Activated CD8-positive, alpha-beta T cell treated with anti-CD3 and anti-CD28 coated beads, Interleukin-2, amount 10 ng/mL, durations not matched to agents 7 days and 5 days (primary cell): ENCODE measurements at regions of chr4 and their contacts with region 1.

Region 1: DNA sequence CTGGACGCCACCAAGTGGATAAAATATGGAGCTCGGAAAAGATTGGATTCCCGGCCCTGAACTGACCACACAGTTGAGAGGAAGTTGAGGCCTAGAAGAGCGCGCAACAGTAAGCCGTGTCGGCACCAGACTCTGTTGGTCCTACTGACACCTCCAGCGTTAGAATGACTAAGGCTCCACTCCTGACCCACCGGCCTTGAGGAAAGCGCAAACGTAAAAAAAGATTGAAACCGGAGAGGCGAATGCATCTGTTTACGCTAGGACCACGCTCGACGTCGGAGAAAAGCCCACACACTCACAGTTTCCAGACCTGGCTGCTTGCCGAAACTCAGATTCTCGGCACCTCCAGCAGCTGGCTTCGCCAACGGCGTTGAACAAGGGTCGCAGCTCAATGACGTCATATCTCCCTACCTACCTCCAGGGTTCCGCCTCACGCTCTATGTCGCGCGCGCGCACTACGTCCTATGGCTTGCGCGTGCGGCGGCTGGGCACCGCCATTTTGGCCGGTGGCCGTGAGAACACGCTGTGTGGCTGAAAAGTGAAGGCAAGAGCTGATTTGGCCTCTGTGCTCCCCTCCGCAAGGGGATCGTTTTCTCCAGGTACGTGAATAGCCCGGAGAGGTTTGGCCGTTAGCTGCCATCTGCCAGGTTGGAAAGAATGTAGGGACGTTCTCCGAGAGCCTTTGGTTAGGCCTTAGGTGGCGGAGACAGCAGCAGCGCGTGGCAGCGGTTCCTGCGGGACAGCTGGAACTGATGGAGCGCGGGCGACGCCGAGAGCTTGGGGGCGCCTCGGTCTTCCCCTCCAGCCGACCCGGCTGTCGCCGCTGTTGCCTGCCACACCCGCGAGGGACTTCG is at the starts of genes ABCE1 and ANAPC10:
- DNase-seq: peak; percentile 97
- ATAC-seq: peak; percentile 91
- H3K4me3 Mint-ChIP-seq: peak within 1 kb of the TSS; percentile 86
- H3K27ac Mint-ChIP-seq: peak within 1 kb of the TSS; percentile 94
- H3K4me1 Mint-ChIP-seq: peaks cover 24% of the 10 kb centered on the region
- H3K27me3 Mint-ChIP-seq: no peaks in the 10 kb centered on the region
- total RNA-seq, gene ABCE1: 72.9 to 75.0 TPM
- total RNA-seq, gene ANAPC10: 24.5 to 26.0 TPM

Region 2: DNA sequence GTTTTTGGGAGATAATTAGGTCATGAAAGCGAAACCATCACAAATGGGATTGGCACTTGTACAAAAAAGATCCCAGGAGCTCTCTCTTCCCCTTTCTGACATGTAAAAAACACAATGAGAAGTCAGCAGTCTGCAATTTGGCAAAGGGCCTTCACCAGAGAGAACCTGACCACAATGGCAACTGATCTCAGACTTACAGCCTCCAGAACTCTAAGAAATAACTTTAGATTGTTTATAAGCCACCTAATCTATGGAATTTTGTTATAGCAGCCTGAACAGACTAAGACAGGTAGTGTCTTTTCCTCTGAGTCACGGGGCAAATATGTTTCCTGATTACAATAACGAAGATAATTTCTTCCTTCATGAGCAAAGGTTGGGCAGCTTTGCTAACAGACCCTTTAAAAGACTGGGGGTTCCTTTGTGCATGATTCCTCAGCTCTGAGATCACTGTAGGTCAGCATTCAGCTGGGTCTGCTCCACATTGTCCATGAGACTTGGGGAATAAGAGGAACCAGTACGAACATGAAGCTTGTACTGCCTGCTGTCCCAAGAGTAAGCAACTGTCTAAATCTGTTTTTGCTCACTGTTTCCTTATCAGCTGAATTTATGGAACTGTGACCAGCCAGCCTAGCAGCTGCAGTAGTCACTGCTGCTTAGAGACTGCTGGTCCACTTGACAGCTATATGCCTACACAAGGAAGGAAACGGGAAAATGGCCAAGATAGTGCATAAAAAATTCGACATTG is 191.7 kb before region 1 on chr4:
- CTCF ChIA-PET with region 1: no interaction called
- POLR2A ChIA-PET with region 1: no interaction called
- DNase-seq: no peak
- ATAC-seq: no peak
- H3K4me3 Mint-ChIP-seq: no peak overlapping the region
- H3K27ac Mint-ChIP-seq: no peak overlapping the region
- H3K4me1 Mint-ChIP-seq: no peaks in the 10 kb centered on the region
- H3K27me3 Mint-ChIP-seq: peaks cover 2% of the 10 kb centered on the region

Region 3: GRCh38 chr4:145083891-145084605 is 14.0 kb before region 1 on chr4:
- CTCF ChIA-PET with region 1: interaction called, 5 read pairs
- POLR2A ChIA-PET with region 1: interaction called, 14 read pairs
- DNase-seq: no peak
- ATAC-seq: no peak
- H3K4me3 Mint-ChIP-seq: no peak overlapping the region
- H3K27ac Mint-ChIP-seq: no peak overlapping the region
- H3K4me1 Mint-ChIP-seq: peaks cover 11% of the 10 kb centered on the region
- H3K27me3 Mint-ChIP-seq: no peaks in the 10 kb centered on the region